ENCODE measurements at regions of chr2 and their contacts with region 1.

Region 1: DNA sequence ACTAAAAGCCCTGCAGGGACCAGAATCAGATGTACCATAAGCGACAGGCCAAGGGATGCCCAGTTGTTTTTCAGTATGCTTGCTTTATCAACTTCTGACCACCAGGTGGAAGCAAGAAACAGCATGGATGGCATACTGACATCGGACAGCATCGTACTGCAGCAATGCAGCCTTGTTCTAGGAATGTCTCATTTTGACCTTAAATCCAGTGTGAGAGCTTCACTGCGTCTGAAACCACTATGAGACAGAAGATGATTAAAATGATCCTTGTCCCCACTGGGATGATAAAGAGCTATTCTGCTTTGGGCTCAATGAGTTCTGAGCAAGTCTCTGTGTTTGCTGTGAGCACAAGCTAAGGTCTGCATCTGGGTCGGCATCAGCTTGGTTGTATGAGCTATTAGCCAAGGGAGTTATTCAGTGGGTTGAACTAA is 54.3 kb downstream of the CDK15 start:
- DNase-seq: peak in 1 of 2 donors; percentile 56
- H3K4me3 ChIP-seq: no peak overlapping the region
- CTCF ChIP-seq: no peak
- POLR2A ChIP-seq: no peak

Region 2: DNA sequence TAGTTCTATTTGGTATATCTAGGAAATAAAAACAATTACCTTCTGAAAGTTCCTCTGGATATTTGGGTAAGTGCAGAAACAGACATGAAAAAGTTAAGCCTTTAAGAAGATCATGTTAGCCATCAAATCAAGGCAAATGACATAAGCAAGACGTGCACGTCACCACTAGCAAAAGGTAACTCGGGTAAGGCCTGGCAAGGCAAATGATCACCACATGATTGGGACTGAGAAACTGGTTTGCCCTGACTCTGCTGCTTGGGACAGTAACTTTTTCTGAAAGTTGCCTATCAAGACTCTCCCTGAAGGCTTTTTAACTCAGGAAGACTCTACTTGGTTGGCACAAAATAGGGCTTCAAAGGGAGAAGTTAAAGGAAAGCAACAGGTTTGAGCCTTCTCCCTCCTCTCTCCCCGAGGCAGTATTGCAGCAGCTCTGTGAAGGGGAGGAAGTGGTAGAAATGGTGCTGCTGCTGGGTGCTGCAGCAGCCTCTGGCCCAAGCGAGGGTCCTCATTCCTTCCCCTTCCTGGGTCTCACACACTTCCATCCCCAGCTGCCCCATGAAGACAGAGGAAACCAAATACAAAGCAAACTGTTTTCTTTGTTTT is 200.3 kb before region 1 on chr2:
- intact Hi-C with region 1: no loop called
- DNase-seq: no peak
- H3K4me3 ChIP-seq: no peak overlapping the region
- CTCF ChIP-seq: no peak
- POLR2A ChIP-seq: no peak

Region 3: DNA sequence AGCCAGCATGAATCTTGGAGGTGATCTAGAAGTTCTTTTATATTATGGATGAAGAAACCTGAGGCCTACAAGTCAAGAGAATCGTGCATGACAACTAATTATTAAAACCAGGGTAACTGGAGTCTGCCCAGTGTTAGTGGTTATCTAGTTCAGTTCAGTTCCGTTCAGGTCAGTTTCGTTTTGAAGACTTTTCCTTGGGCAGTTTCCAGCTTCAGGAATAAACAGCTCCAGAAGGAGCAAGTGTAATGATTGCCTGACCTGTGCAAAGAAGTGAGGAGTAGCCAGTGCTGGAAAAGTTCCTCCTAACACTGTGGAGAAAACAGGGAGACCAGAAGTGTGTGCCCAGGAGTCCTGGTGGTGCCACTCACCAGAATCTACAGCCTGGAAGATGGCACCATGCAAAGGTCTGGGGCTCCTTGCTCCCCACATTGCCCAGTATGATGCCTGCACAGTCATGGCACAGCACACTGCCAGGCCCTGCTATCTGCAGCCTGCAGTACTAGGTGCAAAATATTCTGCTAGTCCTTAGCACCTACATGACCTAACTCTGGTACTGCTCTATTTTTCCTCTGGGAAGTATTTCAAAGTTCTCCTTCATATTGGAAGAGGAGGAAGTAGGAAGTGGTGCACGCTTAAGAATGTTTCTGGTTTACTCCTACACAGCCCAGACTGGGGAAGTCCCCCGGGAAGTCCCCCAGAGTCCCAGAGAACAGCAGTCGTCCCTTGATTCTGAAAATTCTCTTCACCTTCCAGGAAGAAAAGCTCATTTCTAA is 312.0 kb after region 1 on chr2:
- intact Hi-C with region 1: loop called (anchors 5 kb)
- DNase-seq: no peak
- H3K4me3 ChIP-seq: no peak overlapping the region
- CTCF ChIP-seq: no peak
- POLR2A ChIP-seq: no peak

Region 4: DNA sequence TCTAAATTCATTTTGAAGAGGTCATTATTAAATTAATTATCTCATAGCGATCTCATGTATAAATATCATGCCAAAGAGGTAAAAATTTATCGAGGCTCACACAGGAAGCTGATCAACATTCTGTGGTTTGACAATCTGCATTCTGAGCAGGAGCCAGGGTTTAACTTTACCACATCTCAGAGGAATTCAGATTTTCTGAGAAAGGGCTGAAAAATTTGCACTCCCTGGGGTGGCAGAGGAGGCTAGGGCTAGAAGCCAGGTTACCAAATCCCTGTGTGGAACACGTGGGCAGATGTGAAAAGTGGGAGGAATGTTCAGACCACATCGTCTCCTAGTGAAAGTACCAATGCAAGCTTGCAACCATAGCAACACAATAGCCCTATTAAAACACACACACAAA is 1943.4 kb after region 1 on chr2:
- intact Hi-C with region 1: no loop called
- DNase-seq: no peak
- H3K4me3 ChIP-seq: no peak overlapping the region
- CTCF ChIP-seq: no peak
- POLR2A ChIP-seq: no peak

Measured in lower leg skin (tissue), 4 donors.